ENCODE measurements at regions of chr22 and their contacts with region 1.

Region 1: DNA sequence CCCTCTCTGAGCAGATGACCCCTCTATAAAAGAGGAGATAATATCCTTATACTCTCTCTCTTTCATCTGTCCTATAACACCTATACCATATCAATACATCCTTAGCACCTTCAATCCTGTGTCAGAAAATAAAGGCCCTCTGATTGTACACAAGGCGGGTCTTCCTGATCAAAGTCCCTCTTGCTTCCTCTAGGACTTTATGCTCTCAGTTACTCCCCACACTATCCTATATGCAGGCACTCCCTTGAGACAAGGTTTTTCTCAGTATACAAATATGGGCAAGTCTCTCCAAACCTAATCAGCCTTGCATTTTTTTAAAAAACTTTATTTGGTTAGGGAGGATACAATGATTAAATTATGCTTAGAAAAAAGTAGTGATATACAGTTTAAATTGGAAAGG is 17.3 kb upstream of the HORMAD2 start:
- DNase-seq: no peak
- H3K4me3 ChIP-seq: no peak overlapping the region
- H3K4me3 Mint-ChIP-seq: no peak overlapping the region
- H3K27ac Mint-ChIP-seq: peak overlapping the region; percentile 36
- H3K4me1 ChIP-seq: peaks cover 21% of the 10 kb centered on the region
- H3K4me1 Mint-ChIP-seq: peaks cover 30% of the 10 kb centered on the region
- H3K27me3 ChIP-seq: no peaks in the 10 kb centered on the region
- H3K27me3 Mint-ChIP-seq: no peaks in the 10 kb centered on the region
- CTCF ChIP-seq: no peak

Region 2: DNA sequence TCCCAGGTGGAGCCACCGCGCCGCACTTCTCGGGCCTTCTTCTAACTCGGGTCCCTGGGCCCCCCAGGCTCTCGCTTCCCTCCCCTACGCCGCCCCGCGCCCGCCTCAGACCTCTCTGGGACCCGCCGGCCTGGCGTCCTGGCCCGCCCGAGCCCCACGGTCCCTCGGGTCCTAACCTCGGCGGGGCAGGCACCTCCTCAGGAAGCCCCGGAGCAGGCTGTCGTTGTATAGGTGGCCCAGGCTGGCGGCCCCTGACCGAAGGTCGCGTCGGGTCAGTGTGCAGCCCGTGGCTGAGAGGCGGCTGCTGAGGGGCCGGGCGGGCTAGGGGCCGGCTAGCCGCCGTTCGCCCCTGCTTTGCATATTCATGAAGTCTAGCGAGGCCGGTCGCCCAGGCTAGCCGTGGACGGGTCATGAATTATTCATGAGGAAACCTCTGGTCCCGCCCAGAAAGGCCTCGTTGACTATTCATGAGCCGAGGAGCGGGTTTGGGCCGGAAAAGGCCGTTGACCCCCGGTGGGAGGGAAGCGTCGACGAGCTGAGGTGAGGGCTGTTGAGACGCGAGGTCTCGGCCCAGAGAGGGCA is 17.1 kb after region 1 on chr22 and contains the start of gene HORMAD2:
- CTCF ChIA-PET with region 1: no interaction called
- POLR2A ChIA-PET with region 1: no interaction called
- intact Hi-C with region 1: loop called (anchors 2 kb)
- DNase-seq: no peak
- H3K4me3 ChIP-seq: no peak within 1 kb of the TSS
- H3K4me3 Mint-ChIP-seq: no peak within 1 kb of the TSS
- H3K27ac Mint-ChIP-seq: no peak within 1 kb of the TSS
- H3K4me1 ChIP-seq: peaks cover 27% of the 10 kb centered on the region
- H3K4me1 Mint-ChIP-seq: peaks cover 27% of the 10 kb centered on the region
- H3K27me3 ChIP-seq: no peaks in the 10 kb centered on the region
- H3K27me3 Mint-ChIP-seq: no peaks in the 10 kb centered on the region
- CTCF ChIP-seq: no peak
- total RNA-seq, gene HORMAD2: 2.4 and 3.1 TPM in 2 replicates

Region 3: DNA sequence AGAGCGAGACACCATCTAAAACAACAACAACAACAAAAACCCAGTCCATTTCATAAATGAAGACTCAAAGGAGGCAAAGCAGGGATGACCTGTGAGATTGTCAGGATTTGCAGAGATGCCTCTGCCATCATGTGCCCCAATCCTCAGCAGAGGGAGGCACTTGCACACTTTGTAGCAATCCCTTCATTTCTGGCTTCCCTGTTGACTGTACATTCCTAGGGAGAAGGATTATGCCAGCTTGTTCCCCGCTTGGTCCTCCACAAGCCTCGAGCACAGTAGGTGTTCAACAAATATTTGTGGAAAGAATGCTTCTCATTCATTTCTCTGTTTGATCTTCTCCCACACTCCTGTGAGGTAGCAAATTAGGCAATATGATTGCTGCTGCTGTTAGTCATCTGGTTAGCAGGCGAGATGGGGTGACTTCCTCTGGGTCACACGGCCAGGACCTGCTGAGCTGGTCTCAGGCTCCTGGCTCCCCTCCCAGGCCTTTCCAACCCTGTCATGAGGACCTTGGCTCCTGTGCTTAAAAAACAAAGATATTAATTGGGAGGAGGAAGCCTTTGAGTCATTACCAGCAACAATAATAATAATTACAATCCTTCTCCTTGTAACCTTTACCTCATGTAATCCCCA is 149.5 kb after region 1 on chr22:
- CTCF ChIA-PET with region 1: no interaction called
- POLR2A ChIA-PET with region 1: no interaction called
- intact Hi-C with region 1: no loop called
- DNase-seq: peak; percentile 88 to 89
- H3K4me3 ChIP-seq: no peak overlapping the region
- H3K4me3 Mint-ChIP-seq: no peak overlapping the region
- H3K27ac Mint-ChIP-seq: peak overlapping the region; percentile 97
- H3K4me1 ChIP-seq: peaks cover 70% of the 10 kb centered on the region
- H3K4me1 Mint-ChIP-seq: peaks cover 56% of the 10 kb centered on the region
- H3K27me3 ChIP-seq: no peaks in the 10 kb centered on the region
- H3K27me3 Mint-ChIP-seq: no peaks in the 10 kb centered on the region
- CTCF ChIP-seq: no peak

Measured in Caco-2 (cell line).